Activated CD4-positive, alpha-beta T cell treated with anti-CD3 and anti-CD28 coated beads, Interleukin-2, amount 10 ng/mL, durations not matched to agents 24 days and 14 days (primary cell): ENCODE measurements at regions of chr7 and their contacts with region 1.

Region 1: DNA sequence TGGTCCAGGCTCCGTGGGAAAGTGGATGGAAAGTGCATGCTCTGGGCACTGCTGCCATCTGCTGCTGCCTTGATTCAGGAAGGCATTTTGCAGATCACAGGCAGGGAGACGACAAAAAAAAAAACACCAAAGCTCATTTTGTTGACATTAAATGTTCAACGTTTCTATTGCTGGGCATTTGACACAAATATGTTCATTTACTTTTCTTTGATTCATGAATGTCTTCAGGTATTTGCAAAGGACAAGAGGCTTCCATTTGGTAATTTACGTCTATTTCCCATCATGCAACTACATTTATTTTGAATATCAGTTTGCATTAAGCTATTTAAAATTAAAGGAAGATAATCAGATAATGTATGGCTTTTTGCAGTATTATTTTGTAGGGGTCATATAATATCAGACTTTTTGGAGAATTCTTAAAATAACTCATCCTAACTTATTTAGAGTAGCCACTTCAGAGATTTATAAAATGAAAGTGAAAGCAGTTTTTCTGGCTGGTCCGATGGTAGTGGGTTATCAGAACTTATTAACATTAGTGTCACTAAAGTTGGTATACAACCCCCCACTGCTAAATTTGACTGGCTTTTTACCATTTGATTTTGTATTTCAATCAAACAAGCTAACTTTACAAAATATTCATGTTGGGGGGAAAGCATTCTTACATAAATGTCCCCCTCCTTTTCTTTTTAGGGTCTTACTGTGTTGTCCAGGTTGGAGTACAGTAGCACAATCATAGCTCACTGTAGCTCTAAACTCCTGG is 65.3 kb downstream of the PDIA4 start:
- DNase-seq: peak; percentile 89
- H3K4me3 Mint-ChIP-seq: peak overlapping the region; percentile 96
- H3K27ac Mint-ChIP-seq: peak overlapping the region; percentile 89
- H3K4me1 Mint-ChIP-seq: peaks cover 24% of the 10 kb centered on the region
- H3K27me3 Mint-ChIP-seq: no peaks in the 10 kb centered on the region

Region 2: DNA sequence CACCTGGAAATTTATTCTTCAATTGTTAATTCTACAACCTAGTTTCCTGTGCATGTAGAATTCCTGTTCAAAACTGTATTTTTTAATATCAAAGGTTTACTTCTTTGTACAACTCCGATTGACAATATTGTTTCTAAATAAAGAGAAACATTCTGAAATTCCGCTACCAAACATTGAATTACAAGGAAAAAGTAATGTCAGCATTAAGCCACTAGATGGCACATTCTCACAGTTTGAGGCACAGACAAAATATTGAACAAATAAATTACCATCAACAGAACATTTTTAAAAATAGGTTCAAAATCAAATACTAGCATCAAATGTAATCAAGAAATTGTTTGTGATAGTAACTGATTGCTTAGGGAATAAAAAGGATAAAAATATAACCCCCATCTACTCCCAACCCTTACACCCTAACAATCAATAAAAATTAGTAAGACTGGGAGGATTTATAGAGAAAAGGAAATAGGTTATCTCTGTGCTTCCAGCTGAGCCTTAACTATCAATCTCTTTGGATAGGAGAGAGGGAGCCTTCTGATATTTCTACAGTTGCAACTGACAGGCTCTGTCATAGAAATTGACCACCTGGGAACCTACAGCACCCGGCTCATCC is 459.0 kb before region 1 on chr7:
- intact Hi-C with region 1: loop called (anchors 1 kb)
- DNase-seq: peak; percentile 64
- H3K4me3 Mint-ChIP-seq: no peak overlapping the region
- H3K27ac Mint-ChIP-seq: no peak overlapping the region
- H3K4me1 Mint-ChIP-seq: peaks cover 8% of the 10 kb centered on the region
- H3K27me3 Mint-ChIP-seq: peaks cover 21% of the 10 kb centered on the region

Region 3: GRCh38 chr7:148799893-148800545 is 163.0 kb before region 1 on chr7:
- intact Hi-C with region 1: loop called (anchors 5 kb)
- DNase-seq: peak; percentile 56
- H3K4me3 Mint-ChIP-seq: no peak overlapping the region
- H3K27ac Mint-ChIP-seq: peak overlapping the region; percentile 1
- H3K4me1 Mint-ChIP-seq: no peaks in the 10 kb centered on the region
- H3K27me3 Mint-ChIP-seq: no peaks in the 10 kb centered on the region

Region 4: GRCh38 chr7:148884299-148885022 is 78.5 kb before region 1 on chr7:
- intact Hi-C with region 1: loop called (anchors 2 kb)
- DNase-seq: peak; percentile 99
- H3K4me3 Mint-ChIP-seq: peak overlapping the region; percentile 93
- H3K27ac Mint-ChIP-seq: peak overlapping the region; percentile 99
- H3K4me1 Mint-ChIP-seq: peaks cover 26% of the 10 kb centered on the region
- H3K27me3 Mint-ChIP-seq: no peaks in the 10 kb centered on the region

Region 5: GRCh38 chr7:148898845-148899484 is 64.0 kb before region 1 on chr7:
- intact Hi-C with region 1: no loop called
- DNase-seq: peak; percentile 46
- H3K4me3 Mint-ChIP-seq: no peak overlapping the region
- H3K27ac Mint-ChIP-seq: peak overlapping the region; percentile 70
- H3K4me1 Mint-ChIP-seq: peaks cover 16% of the 10 kb centered on the region
- H3K27me3 Mint-ChIP-seq: no peaks in the 10 kb centered on the region

Region 6: DNA sequence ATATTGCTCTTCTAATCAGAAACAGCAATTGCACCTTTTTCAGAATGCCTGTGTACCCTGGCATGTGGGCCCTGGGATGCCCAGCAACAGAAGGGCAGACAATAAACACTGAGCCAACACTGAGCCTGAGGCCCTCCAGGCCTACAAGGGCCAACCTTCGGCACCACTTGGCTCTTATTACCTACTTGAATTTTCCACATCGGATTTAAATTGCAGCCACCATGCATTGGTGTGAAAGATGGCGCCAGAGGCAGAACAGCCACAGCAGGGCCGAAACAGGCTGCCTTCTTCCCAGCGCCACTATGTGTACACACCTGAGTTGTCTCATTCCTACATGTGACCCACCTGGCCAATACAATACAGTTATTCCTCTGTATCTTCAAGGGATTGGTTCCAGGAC is 27.6 kb before region 1 on chr7:
- intact Hi-C with region 1: no loop called
- DNase-seq: no peak
- H3K4me3 Mint-ChIP-seq: no peak overlapping the region
- H3K27ac Mint-ChIP-seq: no peak overlapping the region
- H3K4me1 Mint-ChIP-seq: peaks cover 21% of the 10 kb centered on the region
- H3K27me3 Mint-ChIP-seq: no peaks in the 10 kb centered on the region

Region 7: DNA sequence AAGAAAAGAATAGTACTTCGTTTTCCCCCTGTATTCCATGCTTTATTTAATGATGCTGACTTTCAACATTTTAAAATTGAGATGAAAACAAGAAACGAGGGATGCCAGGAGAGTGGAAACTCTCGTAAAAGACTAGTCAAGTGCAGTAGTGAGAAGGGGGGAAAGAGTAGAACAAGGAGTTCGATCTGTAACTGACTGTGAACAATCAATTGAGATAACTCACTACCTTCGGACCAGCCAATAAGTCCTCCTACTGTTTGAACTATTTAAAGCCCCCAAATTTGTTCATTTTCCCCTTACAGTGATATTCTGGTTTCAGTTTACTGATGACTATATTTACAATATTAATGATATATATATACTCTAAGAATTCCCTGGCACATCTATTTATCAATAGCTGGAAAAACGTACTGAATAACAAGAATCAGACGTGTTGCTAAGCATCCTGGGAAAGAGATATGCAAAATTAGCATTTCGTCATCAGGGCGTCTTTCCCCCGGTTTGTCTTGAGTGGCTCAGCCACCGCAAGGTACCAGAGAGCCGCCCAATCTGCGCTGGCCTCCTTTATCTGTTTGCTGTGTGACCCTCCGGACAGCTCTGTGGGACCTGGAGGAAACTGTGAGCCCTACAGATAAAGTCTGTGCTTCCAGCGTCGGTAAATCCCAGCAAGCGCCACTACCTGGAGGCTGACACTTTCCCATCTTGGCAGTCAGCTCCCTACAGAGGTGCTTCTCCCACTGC is 24.2 kb after region 1 on chr7:
- intact Hi-C with region 1: loop called (anchors 1 kb)
- DNase-seq: peak; percentile 94
- H3K4me3 Mint-ChIP-seq: peak overlapping the region; percentile 95
- H3K27ac Mint-ChIP-seq: peak overlapping the region; percentile 94
- H3K4me1 Mint-ChIP-seq: peaks cover 41% of the 10 kb centered on the region
- H3K27me3 Mint-ChIP-seq: peaks cover 23% of the 10 kb centered on the region